ENCODE measurements at regions of chr1 and their contacts with region 1.

Region 1: DNA sequence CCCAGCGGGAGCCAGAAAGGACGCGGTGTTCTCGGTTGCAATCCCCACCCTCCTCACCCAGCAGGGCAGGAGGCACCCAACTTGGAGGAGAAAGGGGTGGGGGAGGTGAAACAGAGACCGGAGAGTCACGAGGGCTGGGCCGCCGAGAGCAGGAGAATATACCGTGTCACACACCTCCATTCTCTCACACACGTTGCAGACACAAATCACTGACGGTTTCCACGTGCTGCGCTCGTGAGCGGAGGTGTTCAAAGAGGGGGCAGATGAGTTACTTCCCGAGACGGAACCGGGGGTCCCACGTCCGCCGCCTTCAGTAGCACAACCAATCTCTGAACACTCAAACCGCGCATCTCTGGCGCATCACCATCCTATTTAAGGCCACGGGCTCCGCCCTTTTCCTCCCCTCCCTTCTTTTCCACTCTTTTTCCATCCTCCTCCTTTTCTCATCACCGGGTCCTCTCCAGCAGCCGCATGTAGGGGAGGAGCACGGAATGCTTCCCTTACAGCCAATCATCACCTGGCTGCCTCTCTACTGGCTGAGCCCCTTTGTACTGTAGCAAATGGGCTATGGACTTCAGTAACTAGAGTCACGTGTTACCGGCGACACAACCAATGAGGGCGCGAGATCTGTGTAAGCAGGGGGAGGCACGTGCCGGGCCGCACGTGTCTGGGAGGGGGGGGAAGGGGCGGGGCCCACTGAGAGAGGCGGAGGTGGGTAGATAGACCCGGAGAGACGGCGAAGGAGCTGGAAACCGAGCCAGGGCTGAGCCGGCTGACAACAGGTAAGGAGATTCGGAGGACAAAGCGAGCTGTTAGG is at the start of gene CIART:
- DNase-seq: peak; percentile 45 to 92 (median 74)
- ATAC-seq: peak; percentile 76
- H3K4me3 ChIP-seq: peak within 1 kb of the TSS; percentile 56 to 57
- H3K4me3 Mint-ChIP-seq: peak within 1 kb of the TSS; percentile 83
- H3K27ac ChIP-seq: peak within 1 kb of the TSS; percentile 17 to 44
- H3K27ac Mint-ChIP-seq: peak within 1 kb of the TSS; percentile 89
- H3K4me1 ChIP-seq: peaks cover 24% of the 10 kb centered on the region
- H3K4me1 Mint-ChIP-seq: peaks cover 21% of the 10 kb centered on the region
- H3K27me3 ChIP-seq: no peaks in the 10 kb centered on the region
- H3K27me3 Mint-ChIP-seq: no peaks in the 10 kb centered on the region
- CTCF ChIP-seq: no peak
- total RNA-seq, gene CIART: 2.0 to 2.3 TPM

Region 2: DNA sequence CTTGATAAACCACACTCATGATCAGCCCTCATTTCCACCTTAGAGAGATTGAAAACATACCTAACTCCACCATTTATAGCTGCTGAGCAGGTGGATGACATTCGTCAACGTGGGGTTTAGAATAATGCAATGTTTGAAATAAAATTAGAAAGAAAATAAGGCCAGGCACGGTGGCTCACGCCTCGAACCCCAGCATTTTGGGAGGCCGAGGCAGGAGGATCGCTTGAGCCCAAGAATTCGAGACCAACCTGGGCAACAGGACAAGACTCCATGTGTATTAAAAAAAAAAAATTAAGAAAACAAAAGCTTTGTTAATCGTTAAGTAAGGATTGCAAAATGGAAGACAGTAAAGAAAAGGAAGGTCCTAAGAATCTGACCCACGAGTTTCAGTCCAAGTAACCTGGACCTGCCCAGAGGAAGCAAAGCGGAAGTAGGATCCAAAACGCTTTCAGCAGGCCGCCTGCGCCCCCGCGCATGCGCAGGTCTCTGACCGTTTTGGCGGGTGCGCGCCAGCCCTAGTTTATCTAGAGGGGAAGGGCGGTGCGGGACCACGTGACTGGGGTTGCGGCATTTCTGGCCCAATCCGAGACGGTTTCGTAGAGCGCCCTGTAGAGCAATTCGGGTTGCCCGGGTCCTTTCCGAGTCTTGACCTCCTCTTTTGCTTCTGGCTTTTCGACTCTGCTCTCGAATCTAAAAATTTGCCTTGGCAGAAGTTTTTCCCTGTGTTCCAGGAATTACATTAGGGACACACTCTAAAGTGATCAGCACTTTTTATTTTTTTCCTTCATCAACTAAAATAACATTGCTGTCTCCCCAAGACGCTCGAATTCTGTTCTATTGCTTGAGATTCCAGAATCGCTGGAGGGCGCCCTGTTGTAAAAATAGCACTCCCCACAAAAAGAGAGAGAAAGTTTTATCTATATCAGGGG is 68.6 kb before region 1 on chr1:
- CTCF ChIA-PET with region 1: no interaction called
- POLR2A ChIA-PET with region 1: no interaction called
- intact Hi-C with region 1: loop called in 1 of 2 experiments (anchors 1 kb)
- DNase-seq: peak; percentile 82 to 96 (median 92)
- ATAC-seq: peak; percentile 99
- H3K4me3 ChIP-seq: peak overlapping the region; percentile 54 to 62
- H3K4me3 Mint-ChIP-seq: peak overlapping the region; percentile 93
- H3K27ac ChIP-seq: peak overlapping the region; percentile 70 to 74
- H3K27ac Mint-ChIP-seq: peak overlapping the region; percentile 98
- H3K4me1 ChIP-seq: peaks cover 9% of the 10 kb centered on the region
- H3K4me1 Mint-ChIP-seq: peaks cover 13% of the 10 kb centered on the region
- H3K27me3 ChIP-seq: no peaks in the 10 kb centered on the region
- H3K27me3 Mint-ChIP-seq: no peaks in the 10 kb centered on the region
- CTCF ChIP-seq: peak; percentile 54

Region 3: GRCh38 chr1:150293433-150294168 is 11.6 kb after region 1 on chr1 and contains the start of gene MRPS21:
- CTCF ChIA-PET with region 1: interaction called, 5 read pairs
- POLR2A ChIA-PET with region 1: no interaction called
- intact Hi-C with region 1: loop called (anchors 1 kb)
- DNase-seq: peak; percentile 75 to 96 (median 84)
- ATAC-seq: peak; percentile 94
- H3K4me3 ChIP-seq: peak within 1 kb of the TSS; percentile 72 to 79
- H3K4me3 Mint-ChIP-seq: peak within 1 kb of the TSS; percentile 91
- H3K27ac ChIP-seq: peak within 1 kb of the TSS; percentile 96 to 98
- H3K27ac Mint-ChIP-seq: peak within 1 kb of the TSS; percentile 94
- H3K4me1 ChIP-seq: peaks cover 15% of the 10 kb centered on the region
- H3K4me1 Mint-ChIP-seq: peaks cover 35% of the 10 kb centered on the region
- H3K27me3 ChIP-seq: no peaks in the 10 kb centered on the region
- H3K27me3 Mint-ChIP-seq: no peaks in the 10 kb centered on the region
- CTCF ChIP-seq: no peak
- total RNA-seq, gene MRPS21: 41.6 to 43.9 TPM

Region 4: GRCh38 chr1:150387200-150387599 is 105.2 kb after region 1 on chr1:
- CTCF ChIA-PET with region 1: no interaction called
- POLR2A ChIA-PET with region 1: no interaction called
- intact Hi-C with region 1: no loop called
- DNase-seq: no peak
- ATAC-seq: no peak
- H3K4me3 ChIP-seq: no peak overlapping the region
- H3K4me3 Mint-ChIP-seq: no peak overlapping the region
- H3K27ac ChIP-seq: no peak overlapping the region
- H3K27ac Mint-ChIP-seq: peak overlapping the region; percentile 15
- H3K4me1 ChIP-seq: peaks cover 14% of the 10 kb centered on the region
- H3K4me1 Mint-ChIP-seq: peaks cover 54% of the 10 kb centered on the region
- H3K27me3 ChIP-seq: no peaks in the 10 kb centered on the region
- H3K27me3 Mint-ChIP-seq: no peaks in the 10 kb centered on the region
- CTCF ChIP-seq: no peak

Measured in CD8-positive, alpha-beta T cell (primary cell).